CD4-positive, alpha-beta T cell (primary cell): ENCODE measurements at regions of chr16 and their contacts with region 1.

Region 1: DNA sequence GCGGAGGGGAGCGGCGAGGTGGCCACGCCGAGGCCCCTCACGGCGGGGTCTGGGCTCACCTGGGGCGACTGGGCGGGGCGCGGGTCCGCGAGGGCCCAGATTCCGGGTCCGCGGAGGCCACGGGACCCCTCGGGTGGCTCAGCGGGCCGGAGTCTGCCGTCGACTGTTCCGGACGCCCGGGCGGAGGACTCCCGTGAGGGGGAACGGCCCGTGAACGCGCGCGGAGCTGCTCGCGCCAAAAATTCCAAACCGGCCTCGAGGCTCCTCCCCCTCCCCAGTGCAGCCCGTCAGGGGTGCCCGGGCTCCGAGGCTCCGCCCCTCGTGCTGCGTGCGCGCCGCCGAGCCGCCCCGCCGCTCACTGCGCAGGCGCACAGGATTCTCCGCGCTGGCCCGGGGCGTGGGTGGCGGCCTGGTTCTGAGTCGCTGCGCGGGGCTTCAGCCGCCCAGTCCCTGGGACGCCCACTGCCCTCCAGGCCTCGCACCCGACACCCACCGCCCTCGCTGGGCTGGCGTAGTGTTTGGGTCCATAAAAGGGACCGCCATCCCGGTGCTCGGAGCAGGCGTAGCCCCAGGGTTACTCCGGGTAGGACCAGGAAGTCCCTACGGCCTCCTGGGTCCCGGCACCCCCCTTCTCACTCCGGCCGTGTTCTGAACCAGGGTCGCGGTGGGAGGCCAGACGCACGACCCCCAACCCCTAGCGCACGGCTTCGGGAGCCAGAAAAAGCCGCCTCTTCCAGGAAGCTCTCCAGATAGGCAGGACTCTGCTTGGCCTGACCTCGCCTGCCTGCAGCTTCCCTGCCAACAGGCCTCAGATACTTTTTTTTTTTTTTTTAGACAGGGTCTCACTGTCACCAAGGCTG is at the start of gene PKMYT1:
- DNase-seq: peak; percentile 86 to 98 (median 94)
- ATAC-seq: peak; percentile 95
- H3K4me3 ChIP-seq: peak within 1 kb of the TSS; percentile 93
- H3K4me3 Mint-ChIP-seq: peak within 1 kb of the TSS; percentile 82
- H3K27ac ChIP-seq: peak within 1 kb of the TSS; percentile 50 to 73
- H3K27ac Mint-ChIP-seq: peak within 1 kb of the TSS; percentile 49
- H3K4me1 ChIP-seq: peaks cover 29% of the 10 kb centered on the region
- H3K4me1 Mint-ChIP-seq: no peaks in the 10 kb centered on the region
- H3K27me3 ChIP-seq: peaks cover 0 to 3% of the 10 kb centered on the region in 2 experiments
- H3K27me3 Mint-ChIP-seq: no peaks in the 10 kb centered on the region
- CTCF ChIP-seq: no peak
- total RNA-seq, gene PKMYT1: 0.47 to 0.60 TPM

Region 2: DNA sequence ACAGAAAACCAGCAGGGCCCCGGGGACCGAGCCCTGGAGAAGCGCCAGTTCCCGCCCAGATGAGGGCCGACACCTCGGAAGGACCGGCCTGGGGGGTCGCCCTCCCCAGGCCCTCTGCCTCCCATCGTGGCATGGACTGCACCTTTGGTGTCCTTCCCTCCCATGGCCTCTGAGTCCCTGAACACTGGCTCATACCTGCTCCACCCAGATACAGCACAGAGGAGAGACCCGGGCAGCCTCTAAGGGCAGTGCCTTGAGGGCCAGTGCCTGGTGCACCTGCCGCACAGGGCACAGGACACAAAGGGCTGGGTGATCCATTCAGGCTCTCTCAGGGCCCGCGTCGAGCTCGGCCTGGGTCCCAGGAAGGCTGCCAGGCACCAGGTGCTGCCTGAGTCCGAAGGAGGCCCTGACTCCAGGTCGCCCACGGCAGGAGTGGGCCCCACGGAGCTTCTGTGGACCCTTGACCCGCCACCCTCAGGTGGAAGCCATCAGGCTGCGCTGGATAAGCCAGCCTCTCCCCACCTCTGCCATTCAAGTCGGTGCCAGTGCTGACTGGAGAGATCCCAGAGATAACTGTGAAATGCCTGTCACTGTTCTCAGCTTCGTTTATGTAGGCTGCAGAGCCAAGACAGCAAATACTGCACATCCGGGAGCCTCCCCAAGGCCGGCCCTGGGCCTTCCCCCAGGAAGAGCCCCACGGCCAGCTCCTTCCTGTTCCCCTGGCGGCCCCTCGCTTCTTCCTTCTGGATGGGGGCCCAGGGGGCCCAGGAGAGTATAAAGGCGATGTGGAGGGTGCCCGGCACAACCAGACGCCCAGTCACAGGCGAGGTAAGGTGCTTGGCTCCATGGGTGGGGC is 150.7 kb before region 1 on chr16 and contains the start of gene ZG16B:
- CTCF ChIA-PET with region 1: no interaction called
- POLR2A ChIA-PET with region 1: no interaction called
- intact Hi-C with region 1: no loop called
- DNase-seq: no peak
- ATAC-seq: no peak
- H3K4me3 ChIP-seq: no peak within 1 kb of the TSS
- H3K4me3 Mint-ChIP-seq: no peak within 1 kb of the TSS
- H3K27ac ChIP-seq: no peak within 1 kb of the TSS
- H3K27ac Mint-ChIP-seq: no peak within 1 kb of the TSS
- H3K4me1 ChIP-seq: peaks cover 9% of the 10 kb centered on the region
- H3K4me1 Mint-ChIP-seq: no peaks in the 10 kb centered on the region
- H3K27me3 ChIP-seq: peaks cover 0 to 3% of the 10 kb centered on the region in 2 experiments
- H3K27me3 Mint-ChIP-seq: peaks cover 9% of the 10 kb centered on the region
- CTCF ChIP-seq: no peak
- total RNA-seq, gene ZG16B: not detected

Region 3: GRCh38 chr16:2874912-2875362 is 105.5 kb before region 1 on chr16:
- CTCF ChIA-PET with region 1: no interaction called
- POLR2A ChIA-PET with region 1: no interaction called
- intact Hi-C with region 1: loop called in 1 of 2 experiments (anchors 5 kb)
- DNase-seq: peak; percentile 40 to 90 (median 56)
- ATAC-seq: peak; percentile 100
- H3K4me3 ChIP-seq: no peak overlapping the region
- H3K4me3 Mint-ChIP-seq: no peak overlapping the region
- H3K27ac ChIP-seq: no peak overlapping the region
- H3K27ac Mint-ChIP-seq: no peak overlapping the region
- H3K4me1 ChIP-seq: peaks cover 9% of the 10 kb centered on the region
- H3K4me1 Mint-ChIP-seq: no peaks in the 10 kb centered on the region
- H3K27me3 ChIP-seq: no peaks in the 10 kb centered on the region
- H3K27me3 Mint-ChIP-seq: no peaks in the 10 kb centered on the region
- CTCF ChIP-seq: peak; percentile 95

Region 4: DNA sequence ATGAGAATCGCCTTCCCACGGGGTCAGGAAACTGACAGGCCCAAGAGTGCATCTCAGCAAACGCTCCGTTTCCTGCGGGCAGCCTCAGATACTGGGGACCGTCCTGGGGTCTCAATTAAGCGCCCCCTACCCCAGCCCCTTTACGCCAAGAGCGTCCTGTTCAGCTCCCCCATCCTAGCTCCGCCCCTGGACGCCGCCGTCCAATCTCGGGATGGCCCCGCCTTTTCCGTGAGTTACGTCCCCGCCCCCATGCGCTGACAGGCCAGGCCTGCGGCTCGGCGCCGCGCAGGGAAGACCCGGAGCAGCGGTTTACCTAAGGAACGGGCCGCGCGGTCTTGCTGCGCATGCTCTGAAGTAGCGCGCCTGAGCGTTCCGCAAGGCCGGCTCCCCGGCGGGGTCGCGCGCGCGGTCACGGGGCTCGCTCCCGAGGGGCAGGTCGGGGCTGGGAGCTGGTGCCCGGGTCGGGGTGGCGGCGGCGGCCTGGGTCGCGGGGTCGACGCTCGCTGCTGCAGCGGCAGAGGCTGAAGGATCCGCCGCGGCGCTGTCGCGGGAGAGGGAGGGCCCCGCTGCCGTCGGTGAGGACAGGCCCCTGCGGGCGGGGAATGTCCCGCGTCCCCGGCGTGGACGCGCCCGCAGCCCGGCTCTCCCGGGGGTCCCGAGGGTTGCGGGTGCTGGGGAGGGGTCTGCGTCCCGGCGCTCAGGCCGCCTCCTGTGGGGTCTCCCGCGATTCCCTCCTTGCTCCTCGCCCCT is 68.7 kb before region 1 on chr16 and contains the start of gene FLYWCH1:
- CTCF ChIA-PET with region 1: no interaction called
- POLR2A ChIA-PET with region 1: no interaction called
- intact Hi-C with region 1: loop called in 1 of 2 experiments (anchors 5 kb)
- DNase-seq: peak; percentile 97 to 99 (median 98)
- ATAC-seq: peak; percentile 96
- H3K4me3 ChIP-seq: peak within 1 kb of the TSS; percentile 75
- H3K4me3 Mint-ChIP-seq: peak within 1 kb of the TSS; percentile 96
- H3K27ac ChIP-seq: peak within 1 kb of the TSS; percentile 46 to 70
- H3K27ac Mint-ChIP-seq: peak within 1 kb of the TSS; percentile 83
- H3K4me1 ChIP-seq: peaks cover 21% of the 10 kb centered on the region
- H3K4me1 Mint-ChIP-seq: peaks cover 33% of the 10 kb centered on the region
- H3K27me3 ChIP-seq: no peaks in the 10 kb centered on the region
- H3K27me3 Mint-ChIP-seq: no peaks in the 10 kb centered on the region
- CTCF ChIP-seq: no peak
- total RNA-seq, gene FLYWCH1: 84.8 to 97.0 TPM

Region 5: GRCh38 chr16:2968738-2969544 is 11.5 kb before region 1 on chr16 and contains the start of gene PAQR4:
- CTCF ChIA-PET with region 1: interaction called, 4 read pairs
- POLR2A ChIA-PET with region 1: interaction called, 22 read pairs
- intact Hi-C with region 1: loop called in 1 of 2 experiments (anchors 1 kb)
- DNase-seq: peak; percentile 44 to 91 (median 66)
- ATAC-seq: peak; percentile 69
- H3K4me3 ChIP-seq: peak within 1 kb of the TSS; percentile 56
- H3K4me3 Mint-ChIP-seq: peak within 1 kb of the TSS; percentile 81
- H3K27ac ChIP-seq: no peak within 1 kb of the TSS
- H3K27ac Mint-ChIP-seq: no peak within 1 kb of the TSS
- H3K4me1 ChIP-seq: peaks cover 63% of the 10 kb centered on the region
- H3K4me1 Mint-ChIP-seq: peaks cover 27% of the 10 kb centered on the region
- H3K27me3 ChIP-seq: peaks cover 35 to 46% of the 10 kb centered on the region in 2 experiments
- H3K27me3 Mint-ChIP-seq: peaks cover 37% of the 10 kb centered on the region
- CTCF ChIP-seq: no peak
- total RNA-seq, gene PAQR4: 0.39 to 0.44 TPM

Region 6: GRCh38 chr16:3023669-3024478 is 43.4 kb after region 1 on chr16 and contains the starts of genes HCFC1R1 and THOC6:
- CTCF ChIA-PET with region 1: interaction called, 4 read pairs
- POLR2A ChIA-PET with region 1: interaction called, 4 read pairs
- intact Hi-C with region 1: loop called in 1 of 2 experiments (anchors 2 kb)
- DNase-seq: peak; percentile 90 to 99 (median 95)
- ATAC-seq: peak; percentile 76
- H3K4me3 ChIP-seq: peak within 1 kb of the TSS; percentile 78
- H3K4me3 Mint-ChIP-seq: peak within 1 kb of the TSS; percentile 66
- H3K27ac ChIP-seq: peak within 1 kb of the TSS; percentile 80 to 96
- H3K27ac Mint-ChIP-seq: peak within 1 kb of the TSS; percentile 78
- H3K4me1 ChIP-seq: peaks cover 77% of the 10 kb centered on the region
- H3K4me1 Mint-ChIP-seq: peaks cover 51% of the 10 kb centered on the region
- H3K27me3 ChIP-seq: peaks cover 0 to 4% of the 10 kb centered on the region in 2 experiments
- H3K27me3 Mint-ChIP-seq: peaks cover 1% of the 10 kb centered on the region
- CTCF ChIP-seq: no peak
- total RNA-seq, gene HCFC1R1: 8.9 to 11.0 TPM
- total RNA-seq, gene THOC6: 12.0 to 12.9 TPM

Region 7: DNA sequence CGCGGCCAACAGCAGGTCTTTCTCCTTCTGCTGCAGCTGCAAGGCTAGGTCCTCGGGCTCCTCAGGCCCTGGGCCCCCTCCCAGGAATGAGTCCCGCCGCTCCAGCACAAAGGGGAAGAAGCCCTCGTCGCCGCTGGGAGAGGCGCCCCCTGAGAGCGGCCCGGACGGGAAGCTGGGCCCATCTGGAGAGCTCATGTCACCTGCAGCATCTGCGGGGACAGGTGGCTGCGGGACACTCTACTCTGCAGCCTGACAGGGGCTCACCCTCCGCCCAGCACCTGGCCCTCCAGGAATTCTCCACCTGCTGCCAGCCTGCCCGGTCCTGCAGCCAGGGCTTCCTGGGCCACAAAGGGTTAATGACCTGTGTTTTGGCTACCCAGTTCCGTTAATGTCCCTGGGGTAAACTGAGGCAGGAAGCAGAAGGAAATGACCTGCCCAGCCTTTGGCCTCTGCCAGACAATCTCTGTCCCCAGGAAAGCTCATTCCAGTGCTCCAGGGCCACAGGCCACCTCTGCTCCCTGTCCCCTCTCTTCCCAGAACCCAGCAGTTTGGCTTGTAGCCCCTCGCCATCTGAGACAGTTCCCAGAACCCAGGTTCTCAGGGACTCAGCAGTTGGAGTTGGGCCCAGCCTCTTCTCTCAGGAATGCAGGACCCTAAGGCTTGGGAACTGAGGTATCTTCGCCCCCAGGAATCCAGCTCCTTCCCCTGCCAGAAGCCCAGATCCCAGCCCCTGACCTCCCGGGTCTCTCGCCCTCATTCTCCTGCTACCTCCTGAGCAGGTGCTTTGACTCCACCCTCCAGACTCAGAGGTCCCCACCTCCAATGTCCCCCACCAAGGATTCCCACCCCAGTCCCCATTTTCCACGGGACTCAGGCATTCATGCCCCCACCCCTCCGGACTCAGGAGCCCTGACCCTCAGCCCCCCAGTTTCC is 55.1 kb after region 1 on chr16:
- CTCF ChIA-PET with region 1: interaction called, 10 read pairs
- POLR2A ChIA-PET with region 1: interaction called, 3 read pairs
- intact Hi-C with region 1: no loop called
- DNase-seq: peak in 1 of 14 experiments; percentile 23
- ATAC-seq: no peak
- H3K4me3 ChIP-seq: no peak overlapping the region
- H3K4me3 Mint-ChIP-seq: no peak overlapping the region
- H3K27ac ChIP-seq: no peak overlapping the region
- H3K27ac Mint-ChIP-seq: no peak overlapping the region
- H3K4me1 ChIP-seq: peaks cover 19% of the 10 kb centered on the region
- H3K4me1 Mint-ChIP-seq: peaks cover 17% of the 10 kb centered on the region
- H3K27me3 ChIP-seq: peaks cover 71 to 81% of the 10 kb centered on the region in 2 experiments
- H3K27me3 Mint-ChIP-seq: peaks cover 81% of the 10 kb centered on the region
- CTCF ChIP-seq: no peak

Region 8: GRCh38 chr16:3059000-3059722 is 78.7 kb after region 1 on chr16:
- CTCF ChIA-PET with region 1: no interaction called
- POLR2A ChIA-PET with region 1: no interaction called
- intact Hi-C with region 1: no loop called
- DNase-seq: peak; percentile 70 to 95 (median 86)
- ATAC-seq: peak; percentile 88
- H3K4me3 ChIP-seq: peak overlapping the region; percentile 87
- H3K4me3 Mint-ChIP-seq: peak overlapping the region; percentile 95
- H3K27ac ChIP-seq: peak overlapping the region; percentile 72 to 74
- H3K27ac Mint-ChIP-seq: peak overlapping the region; percentile 83
- H3K4me1 ChIP-seq: peaks cover 84% of the 10 kb centered on the region
- H3K4me1 Mint-ChIP-seq: peaks cover 60% of the 10 kb centered on the region
- H3K27me3 ChIP-seq: no peaks in the 10 kb centered on the region
- H3K27me3 Mint-ChIP-seq: no peaks in the 10 kb centered on the region
- CTCF ChIP-seq: peak; percentile 88

Region 9: DNA sequence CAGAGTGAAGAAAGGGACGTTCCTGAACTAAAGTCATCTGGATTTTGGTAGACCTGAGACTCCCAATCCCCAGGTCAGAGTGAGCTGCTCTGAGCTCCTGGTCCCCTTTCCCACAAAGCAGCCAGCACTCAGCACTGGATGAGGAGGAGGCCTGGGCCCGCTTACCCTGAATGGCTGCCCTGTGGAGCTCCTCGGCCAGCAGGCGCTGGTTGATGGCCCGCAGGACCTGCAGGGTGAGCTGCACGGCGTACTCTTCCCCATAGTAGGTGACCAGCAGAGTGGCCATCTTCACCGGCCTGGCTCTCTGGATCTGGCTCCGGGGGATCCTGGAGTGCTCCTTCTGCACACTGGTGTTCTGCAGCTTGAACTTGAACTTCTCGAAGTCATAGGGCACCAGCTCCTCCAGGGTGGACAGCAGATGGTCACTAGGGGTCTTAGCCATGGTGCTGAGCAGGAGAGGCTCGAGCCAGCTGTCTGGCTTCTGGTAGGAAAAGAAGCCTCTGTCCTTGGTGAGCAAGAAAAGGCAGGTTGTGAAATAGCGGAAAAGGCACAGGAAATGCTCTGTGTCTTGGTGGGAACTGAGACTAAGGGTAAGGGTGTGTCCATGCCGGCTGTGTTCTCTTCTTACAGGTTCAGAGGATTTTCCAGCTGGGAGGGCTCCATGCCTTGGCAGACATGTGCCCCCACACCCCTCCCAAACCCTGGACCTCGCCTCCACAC is 275.8 kb after region 1 on chr16 and contains the start of gene MEFV:
- CTCF ChIA-PET with region 1: no interaction called
- POLR2A ChIA-PET with region 1: no interaction called
- intact Hi-C with region 1: no loop called
- DNase-seq: peak in 2 of 14 experiments; percentile 53 to 59
- ATAC-seq: no peak
- H3K4me3 ChIP-seq: peak within 1 kb of the TSS; percentile 39
- H3K4me3 Mint-ChIP-seq: no peak within 1 kb of the TSS
- H3K27ac ChIP-seq: no peak within 1 kb of the TSS
- H3K27ac Mint-ChIP-seq: no peak within 1 kb of the TSS
- H3K4me1 ChIP-seq: peaks cover 5% of the 10 kb centered on the region
- H3K4me1 Mint-ChIP-seq: no peaks in the 10 kb centered on the region
- H3K27me3 ChIP-seq: peaks cover 0 to 2% of the 10 kb centered on the region in 2 experiments
- H3K27me3 Mint-ChIP-seq: no peaks in the 10 kb centered on the region
- CTCF ChIP-seq: no peak
- total RNA-seq, gene MEFV: 0.60 to 0.73 TPM